HCT116 (cell line): ENCODE measurements at regions of chr7 and their contacts with region 1.

Region 1: GRCh38 chr7:2555121-2556052 is at the start of gene BRAT1:
- DNase-seq: peak; percentile 89
- ATAC-seq: peak; percentile 79
- H3K4me3 ChIP-seq: peak within 1 kb of the TSS; percentile 57 to 88
- H3K27ac ChIP-seq: peak within 1 kb of the TSS; percentile 100
- H3K4me1 ChIP-seq: peaks cover 22 to 45% of the 10 kb centered on the region in 2 experiments
- H3K27me3 ChIP-seq: no peaks in the 10 kb centered on the region
- CTCF ChIP-seq: peak in 2 of 3 experiments; percentile 45 to 55; a peak in 4 of 6 replicates
- POLR2A ChIP-seq: peak; percentile 56
- RAD21 ChIP-seq: no peak
- total RNA-seq, gene BRAT1: 47.6 TPM

Region 2: DNA sequence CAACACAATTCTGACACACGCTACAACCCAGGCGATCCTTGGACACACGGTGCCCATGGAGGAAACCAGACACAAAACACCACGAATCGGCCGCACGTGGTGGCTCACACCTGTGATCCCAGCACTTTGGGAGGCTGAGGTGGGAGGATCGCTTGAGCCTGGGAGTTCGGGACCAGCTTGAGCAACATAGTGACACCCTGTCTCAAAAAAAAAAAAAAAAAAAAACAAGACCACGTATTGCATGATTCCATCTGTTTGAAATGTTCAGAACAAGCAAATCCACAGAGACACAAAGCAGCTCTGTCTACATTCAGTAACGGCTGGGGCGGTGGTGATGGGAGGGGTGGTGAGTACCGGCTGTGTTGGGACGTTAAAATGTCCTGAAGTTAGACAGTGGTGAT is 1626.1 kb before region 1 on chr7:
- CTCF ChIA-PET with region 1: no interaction called
- POLR2A ChIA-PET with region 1: interaction called, 11 read pairs
- RAD21 ChIA-PET with region 1: no interaction called
- intact Hi-C with region 1: no loop called
- DNase-seq: no peak
- ATAC-seq: no peak
- H3K4me3 ChIP-seq: no peak overlapping the region
- H3K27ac ChIP-seq: no peak overlapping the region
- H3K4me1 ChIP-seq: peaks cover 0 to 13% of the 10 kb centered on the region in 2 experiments; a peak in 2 of 4 replicates
- H3K27me3 ChIP-seq: no peaks in the 10 kb centered on the region
- CTCF ChIP-seq: no peak
- POLR2A ChIP-seq: no peak
- RAD21 ChIP-seq: no peak

Region 3: DNA sequence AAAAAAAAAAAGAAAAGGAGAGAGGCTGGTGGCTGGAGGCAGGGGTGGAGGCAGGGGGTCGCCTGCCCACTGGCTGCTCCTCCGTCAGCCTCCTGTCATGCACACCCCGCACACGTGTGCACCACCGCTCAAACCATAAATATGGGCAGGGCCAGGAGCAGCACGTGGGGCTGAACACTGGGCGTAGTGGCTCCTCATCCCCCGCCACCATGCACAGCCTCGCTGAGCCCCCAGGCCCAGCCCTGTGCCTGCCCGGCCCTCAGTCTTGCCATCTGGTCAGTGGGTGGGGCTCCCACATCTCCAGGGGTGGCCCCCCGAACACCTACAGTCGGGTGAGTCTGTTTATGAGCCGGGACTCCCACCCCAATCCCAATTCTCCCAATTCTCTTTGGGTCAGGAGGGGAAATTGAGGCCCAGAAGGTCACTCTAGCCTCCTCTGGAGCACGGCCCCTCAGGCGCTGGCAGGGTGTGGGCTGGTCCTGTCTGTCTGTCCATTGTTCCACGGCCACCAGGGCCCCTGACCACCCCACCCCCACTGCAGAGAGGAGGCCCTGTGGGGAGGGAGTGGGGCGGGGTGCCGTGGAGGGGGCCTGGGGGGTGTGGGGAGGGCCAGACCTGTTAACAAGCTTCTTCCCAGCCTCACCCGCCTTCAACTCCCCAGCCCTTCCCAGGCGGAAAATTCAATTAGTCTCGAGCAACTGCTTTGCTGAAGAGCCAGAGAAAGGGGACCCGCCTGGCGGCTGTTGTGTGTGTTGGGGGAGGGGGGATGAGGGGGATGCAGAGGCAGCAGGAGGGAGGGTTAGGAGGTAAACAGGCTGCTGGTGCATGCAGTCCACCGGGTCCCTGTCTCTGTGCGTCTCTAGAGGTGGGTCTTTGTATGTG is 59.7 kb before region 1 on chr7:
- CTCF ChIA-PET with region 1: no interaction called
- POLR2A ChIA-PET with region 1: no interaction called
- RAD21 ChIA-PET with region 1: no interaction called
- intact Hi-C with region 1: no loop called
- DNase-seq: no peak
- ATAC-seq: no peak
- H3K4me3 ChIP-seq: no peak overlapping the region
- H3K27ac ChIP-seq: no peak overlapping the region
- H3K4me1 ChIP-seq: no peaks in the 10 kb centered on the region; a peak in 1 of 4 replicates
- H3K27me3 ChIP-seq: no peaks in the 10 kb centered on the region
- CTCF ChIP-seq: no peak
- POLR2A ChIP-seq: no peak
- RAD21 ChIP-seq: no peak

Region 4: GRCh38 chr7:2523941-2524807 is 31.2 kb before region 1 on chr7:
- CTCF ChIA-PET with region 1: no interaction called
- POLR2A ChIA-PET with region 1: no interaction called
- RAD21 ChIA-PET with region 1: no interaction called
- intact Hi-C with region 1: loop called (anchors 5 kb)
- DNase-seq: peak; percentile 84
- ATAC-seq: peak; percentile 57
- H3K4me3 ChIP-seq: peak overlapping the region; percentile 28 to 42
- H3K27ac ChIP-seq: peak overlapping the region; percentile 98
- H3K4me1 ChIP-seq: peaks cover 64 to 80% of the 10 kb centered on the region in 2 experiments
- H3K27me3 ChIP-seq: no peaks in the 10 kb centered on the region
- CTCF ChIP-seq: no peak
- POLR2A ChIP-seq: no peak
- RAD21 ChIP-seq: no peak